ENCODE measurements at regions of chr6 and their contacts with region 1.

Region 1: DNA sequence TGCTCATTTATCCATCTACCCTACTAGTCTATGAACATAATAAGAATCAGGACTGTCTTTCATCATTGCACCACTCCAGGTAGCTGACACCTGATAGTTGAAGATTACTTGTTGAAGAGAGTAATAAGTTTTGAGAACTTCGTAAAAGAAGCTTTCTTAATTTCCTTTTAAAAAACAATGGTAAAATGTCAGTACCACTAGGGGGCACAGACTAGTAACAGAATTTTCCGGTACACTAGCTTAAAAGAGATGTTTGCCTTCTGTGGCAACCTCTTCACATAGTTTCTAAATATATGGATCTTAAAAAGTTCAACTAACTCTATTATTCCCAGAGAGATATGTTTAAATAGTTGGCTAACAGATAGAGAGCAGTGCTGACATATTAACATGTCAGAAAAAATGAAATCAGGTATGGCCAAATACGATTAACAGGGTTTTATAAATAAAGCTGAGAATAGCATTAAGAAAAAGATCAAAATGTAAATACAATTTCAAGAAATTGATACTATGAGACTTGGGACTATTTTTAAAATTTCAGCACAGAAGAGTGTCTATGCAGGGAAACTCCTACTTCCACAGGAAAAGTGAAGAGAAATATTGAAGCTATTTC is 5.4 kb upstream of the KCNQ5 start:
- DNase-seq: no peak
- H3K4me3 ChIP-seq: no peak overlapping the region
- H3K27ac ChIP-seq: no peak overlapping the region
- H3K27me3 ChIP-seq: no peaks in the 10 kb centered on the region
- CTCF ChIP-seq: peak; percentile 71

Region 2: GRCh38 chr6:72589096-72589495 is 27.4 kb before region 1 on chr6:
- CTCF ChIA-PET with region 1: interaction called, 20 read pairs
- POLR2A ChIA-PET with region 1: no interaction called
- DNase-seq: no peak
- H3K4me3 ChIP-seq: no peak overlapping the region
- H3K27ac ChIP-seq: no peak overlapping the region
- H3K27me3 ChIP-seq: no peaks in the 10 kb centered on the region
- CTCF ChIP-seq: no peak

Region 3: DNA sequence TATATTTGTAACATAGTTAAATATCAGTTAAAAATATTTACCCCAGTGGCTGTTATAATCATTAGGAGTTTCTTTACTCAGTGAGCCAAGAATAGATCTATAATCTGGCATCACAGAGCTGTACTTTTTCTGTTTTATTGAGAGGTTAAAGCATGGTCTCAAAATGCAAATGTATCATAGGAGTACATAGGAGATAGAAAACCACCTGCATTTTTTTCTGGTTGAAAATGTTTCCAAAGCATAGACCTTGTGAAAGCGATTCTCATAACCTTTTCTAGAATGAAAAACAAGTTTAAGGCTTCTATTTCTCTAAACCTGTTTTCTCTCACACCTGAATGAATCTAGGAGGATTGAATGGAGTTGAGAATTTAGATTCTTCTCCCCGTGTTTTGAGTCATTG is 19.7 kb after region 1 on chr6:
- CTCF ChIA-PET with region 1: interaction called, 16 read pairs
- POLR2A ChIA-PET with region 1: no interaction called
- DNase-seq: no peak
- H3K4me3 ChIP-seq: no peak overlapping the region
- H3K27ac ChIP-seq: no peak overlapping the region
- H3K27me3 ChIP-seq: no peaks in the 10 kb centered on the region
- CTCF ChIP-seq: no peak

Region 4: DNA sequence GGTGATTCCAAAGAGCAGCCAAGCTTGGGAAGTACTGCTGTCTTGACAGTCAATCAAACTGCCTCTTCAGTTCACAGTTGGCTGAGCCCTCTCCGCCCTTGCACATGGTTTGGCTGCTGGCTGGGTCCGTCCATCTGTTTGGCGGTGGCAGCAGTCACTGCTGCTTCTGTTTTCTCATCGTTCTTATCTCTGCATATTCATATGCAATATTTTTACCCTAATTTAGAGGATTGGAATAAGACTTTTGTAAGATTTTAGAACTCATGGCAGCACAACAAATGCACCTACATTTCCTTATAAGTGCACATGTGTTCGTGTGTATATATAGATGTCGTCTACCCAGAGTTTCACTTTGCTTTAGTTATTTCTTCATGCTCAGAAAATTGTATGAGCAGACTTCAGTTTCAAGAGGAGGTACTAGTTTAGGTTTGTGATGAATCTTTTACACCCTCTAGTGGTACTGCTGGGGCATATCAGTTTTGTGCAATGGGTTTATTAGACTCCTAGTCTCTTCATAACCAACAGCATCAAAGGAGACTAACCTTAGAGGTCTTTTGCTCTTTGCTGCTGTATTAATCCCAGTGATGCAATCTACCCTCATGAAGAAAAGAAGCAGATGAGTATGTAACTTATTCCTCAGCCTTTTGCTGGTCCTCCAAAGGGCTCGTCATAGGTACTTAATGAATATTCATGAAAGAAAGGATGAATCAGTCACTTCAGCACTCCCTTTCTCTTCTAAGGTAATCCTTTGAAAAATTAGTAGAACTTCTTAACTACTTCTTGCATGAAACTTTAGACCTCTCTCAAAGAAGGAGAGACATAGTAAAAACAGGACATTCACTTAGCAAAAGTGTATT is 564.5 kb after region 1 on chr6:
- CTCF ChIA-PET with region 1: interaction called, 38 read pairs
- POLR2A ChIA-PET with region 1: no interaction called
- DNase-seq: peak; percentile 44
- H3K4me3 ChIP-seq: peak overlapping the region; percentile 51
- H3K27ac ChIP-seq: no peak overlapping the region
- H3K27me3 ChIP-seq: no peaks in the 10 kb centered on the region
- CTCF ChIP-seq: peak; percentile 94

Measured in AG04450 (cell line).